PC-3 (cell line): ENCODE measurements at regions of chr3 and their contacts with region 1.

Region 1: GRCh38 chr3:194089357-194090177 is 46.4 kb upstream of the HES1 start:
- DNase-seq: peak; percentile 99
- ATAC-seq: peak; percentile 88
- H3K4me3 ChIP-seq: 0 out of 2 replicates have a peak overlapping the region, but pooled peaks have one; percentile 21
- H3K27ac ChIP-seq: peak overlapping the region; percentile 73
- H3K4me1 ChIP-seq: peaks cover 39% of the 10 kb centered on the region
- H3K27me3 ChIP-seq: no peaks in the 10 kb centered on the region
- CTCF ChIP-seq: no peak

Region 2: DNA sequence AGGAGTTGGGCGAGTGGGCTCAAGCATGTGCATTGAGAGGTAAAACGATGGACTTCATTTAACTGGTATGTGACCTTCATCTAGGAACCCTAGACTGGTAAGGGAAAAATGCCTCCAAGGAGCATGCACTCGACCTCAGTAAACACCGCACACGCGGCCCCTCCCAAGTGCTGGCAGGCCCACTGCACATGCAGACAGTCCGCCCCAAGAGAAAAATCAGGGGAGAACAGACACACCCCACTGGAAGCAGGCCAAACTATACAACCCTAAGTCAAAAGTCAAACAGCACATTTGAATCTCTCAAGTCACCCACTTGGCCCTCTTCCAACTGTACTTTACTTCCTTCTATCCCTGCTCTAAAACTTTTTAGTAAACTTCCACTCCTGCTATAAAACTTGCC is 203.8 kb before region 1 on chr3:
- CTCF ChIA-PET with region 1: no interaction called
- POLR2A ChIA-PET with region 1: no interaction called
- intact Hi-C with region 1: no loop called
- DNase-seq: peak; percentile 36
- ATAC-seq: no peak; the same call in 1 of the 2 replicates
- H3K4me3 ChIP-seq: no peak overlapping the region
- H3K27ac ChIP-seq: no peak overlapping the region
- H3K4me1 ChIP-seq: peaks cover 28% of the 10 kb centered on the region
- H3K27me3 ChIP-seq: no peaks in the 10 kb centered on the region
- CTCF ChIP-seq: no peak

Region 3: GRCh38 chr3:194075802-194076460 is 13.6 kb before region 1 on chr3:
- CTCF ChIA-PET with region 1: no interaction called
- POLR2A ChIA-PET with region 1: no interaction called
- intact Hi-C with region 1: loop called (anchors 2 kb)
- DNase-seq: peak; percentile 24
- ATAC-seq: peak; percentile 68
- H3K4me3 ChIP-seq: no peak overlapping the region
- H3K27ac ChIP-seq: no peak overlapping the region
- H3K4me1 ChIP-seq: peaks cover 25% of the 10 kb centered on the region
- H3K27me3 ChIP-seq: no peaks in the 10 kb centered on the region
- CTCF ChIP-seq: no peak; the same call in 1 of the 2 replicates

Region 4: DNA sequence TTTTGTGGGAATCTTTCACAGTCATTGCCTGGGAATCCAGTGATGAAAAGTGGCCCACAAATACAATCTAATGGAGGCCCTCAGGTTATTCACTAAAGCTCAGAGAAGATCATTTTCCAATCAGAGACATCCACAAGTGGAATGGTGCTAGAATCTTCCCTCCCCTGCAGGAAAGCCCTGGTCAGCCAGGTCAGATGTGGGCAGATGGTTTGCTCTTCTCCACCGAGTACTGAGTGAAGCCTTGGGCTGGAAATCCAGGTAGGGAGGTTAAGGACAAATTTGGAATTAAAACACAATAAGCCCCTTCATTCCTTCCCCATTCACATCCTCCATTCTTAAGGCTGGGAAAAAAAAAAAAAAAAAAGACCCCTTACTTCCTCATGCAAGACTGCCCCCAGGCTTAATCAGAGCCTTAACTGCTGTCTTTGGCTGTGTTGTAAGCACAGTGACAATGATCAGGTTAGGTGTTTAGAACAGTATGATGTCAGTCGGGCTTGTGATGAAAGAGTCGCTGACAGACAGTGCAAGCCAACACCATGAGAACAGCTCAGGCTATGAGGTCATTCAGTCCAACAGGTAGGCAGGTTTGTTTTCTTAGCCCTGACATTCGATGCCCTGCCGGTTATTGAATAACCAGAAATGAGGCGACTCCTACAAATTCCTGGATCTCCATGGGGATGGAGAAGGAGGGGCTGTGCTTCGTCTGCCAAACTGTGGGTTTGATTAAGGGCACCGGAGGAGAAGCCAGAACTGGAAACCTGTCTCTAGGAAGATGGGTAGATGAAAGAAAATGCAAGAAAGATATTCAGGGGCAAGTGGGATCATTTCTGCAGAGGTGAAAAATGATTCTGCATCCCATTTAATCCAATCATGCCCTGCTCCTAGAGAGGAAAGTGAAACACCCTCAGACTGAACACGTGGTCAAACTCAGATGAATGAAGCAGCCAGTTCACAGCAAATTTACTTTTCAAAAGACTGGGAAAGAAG is 22.8 kb after region 1 on chr3:
- CTCF ChIA-PET with region 1: no interaction called
- POLR2A ChIA-PET with region 1: interaction called, 16 read pairs
- intact Hi-C with region 1: no loop called
- DNase-seq: peak; percentile 92
- ATAC-seq: peak; percentile 93
- H3K4me3 ChIP-seq: peak overlapping the region; percentile 12; the same call in 1 of the 2 replicates
- H3K27ac ChIP-seq: peak overlapping the region; percentile 56
- H3K4me1 ChIP-seq: peaks cover 13% of the 10 kb centered on the region
- H3K27me3 ChIP-seq: no peaks in the 10 kb centered on the region
- CTCF ChIP-seq: no peak

Region 5: GRCh38 chr3:194121891-194122631 is 32.5 kb after region 1 on chr3:
- CTCF ChIA-PET with region 1: no interaction called
- POLR2A ChIA-PET with region 1: no interaction called
- intact Hi-C with region 1: loop called (anchors 2 kb)
- DNase-seq: peak; percentile 88
- ATAC-seq: peak; percentile 95
- H3K4me3 ChIP-seq: peak overlapping the region; percentile 5; the same call in 1 of the 2 replicates
- H3K27ac ChIP-seq: peak overlapping the region; percentile 46
- H3K4me1 ChIP-seq: peaks cover 38% of the 10 kb centered on the region
- H3K27me3 ChIP-seq: no peaks in the 10 kb centered on the region
- CTCF ChIP-seq: no peak